ENCODE measurements at regions of chr19 and their contacts with region 1.

Region 1: GRCh38 chr19:54674021-54674617 is 11.3 kb downstream of the LILRB4 start:
- DNase-seq: peak; percentile 67
- H3K4me3 Mint-ChIP-seq: no peak overlapping the region
- H3K27ac Mint-ChIP-seq: no peak overlapping the region
- H3K4me1 Mint-ChIP-seq: no peaks in the 10 kb centered on the region
- H3K27me3 Mint-ChIP-seq: no peaks in the 10 kb centered on the region
- CTCF ChIP-seq: peak; percentile 62

Region 2: DNA sequence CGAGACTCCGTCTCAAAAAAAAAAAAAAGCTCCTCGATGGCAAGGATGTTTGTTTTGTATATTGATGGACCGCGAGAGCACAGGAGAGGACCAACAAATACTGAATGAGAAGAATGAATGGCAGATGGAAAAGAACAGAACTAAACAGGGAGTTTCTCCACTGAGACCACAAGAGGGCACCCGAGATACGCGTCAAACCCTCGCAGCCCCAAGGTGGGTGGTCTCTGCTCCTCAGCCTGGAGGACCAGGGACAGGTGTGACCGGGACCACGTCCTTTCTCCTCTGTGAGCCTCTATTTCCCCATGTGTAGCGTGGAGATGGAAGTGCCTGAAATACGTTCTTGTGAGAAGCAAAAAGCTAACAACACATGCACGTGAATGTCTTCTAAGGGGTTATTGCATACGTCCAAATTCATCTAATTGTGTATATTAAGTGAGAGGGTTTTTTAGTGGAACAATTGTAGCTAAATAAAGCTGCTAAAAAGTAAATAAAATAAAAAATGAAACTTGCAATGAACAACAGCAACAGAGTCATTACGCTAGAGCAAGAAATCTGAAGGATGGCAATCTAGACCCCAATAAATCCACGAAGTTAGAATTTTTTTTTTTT is 192.7 kb before region 1 on chr19:
- CTCF ChIA-PET with region 1: interaction called, 22 read pairs
- POLR2A ChIA-PET with region 1: no interaction called
- intact Hi-C with region 1: loop called (anchors 2 kb)
- DNase-seq: peak; percentile 59
- H3K4me3 Mint-ChIP-seq: no peak overlapping the region
- H3K27ac Mint-ChIP-seq: no peak overlapping the region
- H3K4me1 Mint-ChIP-seq: no peaks in the 10 kb centered on the region
- H3K27me3 Mint-ChIP-seq: peaks cover 23% of the 10 kb centered on the region
- CTCF ChIP-seq: peak; percentile 55

Region 3: GRCh38 chr19:54653181-54653809 is 20.8 kb before region 1 on chr19:
- CTCF ChIA-PET with region 1: interaction called, 84 read pairs
- POLR2A ChIA-PET with region 1: no interaction called
- intact Hi-C with region 1: no loop called
- DNase-seq: peak; percentile 53
- H3K4me3 Mint-ChIP-seq: no peak overlapping the region
- H3K27ac Mint-ChIP-seq: no peak overlapping the region
- H3K4me1 Mint-ChIP-seq: no peaks in the 10 kb centered on the region
- H3K27me3 Mint-ChIP-seq: no peaks in the 10 kb centered on the region
- CTCF ChIP-seq: peak; percentile 38

Region 4: DNA sequence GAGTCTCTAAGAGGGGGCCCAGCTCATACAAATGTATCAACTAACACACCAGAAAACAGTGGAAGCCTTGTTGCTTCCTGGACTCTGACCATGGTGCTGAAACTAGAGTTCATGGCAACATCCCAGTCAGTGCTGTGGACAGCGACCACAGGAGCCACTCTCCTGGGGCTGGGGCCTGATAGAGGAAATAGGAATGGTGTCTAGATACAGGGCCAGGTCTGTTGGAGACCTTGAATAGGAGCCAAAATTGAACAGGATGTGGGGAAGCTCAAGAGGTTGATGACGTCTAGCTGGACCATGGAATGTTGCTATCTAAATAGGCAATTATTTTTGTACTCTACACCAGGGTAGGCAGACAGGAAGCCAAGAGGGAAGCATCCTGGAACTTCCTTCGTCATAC is 10.4 kb after region 1 on chr19:
- CTCF ChIA-PET with region 1: interaction called, 36 read pairs
- POLR2A ChIA-PET with region 1: interaction called, 3 read pairs
- intact Hi-C with region 1: no loop called
- DNase-seq: peak; percentile 75
- H3K4me3 Mint-ChIP-seq: no peak overlapping the region
- H3K27ac Mint-ChIP-seq: no peak overlapping the region
- H3K4me1 Mint-ChIP-seq: no peaks in the 10 kb centered on the region
- H3K27me3 Mint-ChIP-seq: no peaks in the 10 kb centered on the region
- CTCF ChIP-seq: no peak

Region 5: GRCh38 chr19:55088543-55089341 is 414.6 kb after region 1 on chr19:
- CTCF ChIA-PET with region 1: interaction called, 11 read pairs
- POLR2A ChIA-PET with region 1: no interaction called
- intact Hi-C with region 1: no loop called
- DNase-seq: peak; percentile 69
- H3K4me3 Mint-ChIP-seq: no peak overlapping the region
- H3K27ac Mint-ChIP-seq: no peak overlapping the region
- H3K4me1 Mint-ChIP-seq: peaks cover 10% of the 10 kb centered on the region
- H3K27me3 Mint-ChIP-seq: no peaks in the 10 kb centered on the region
- CTCF ChIP-seq: peak; percentile 82

Measured in MCF 10A (cell line).